Caco-2 (cell line): ENCODE measurements at regions of chr9 and their contacts with region 1.

Region 1: DNA sequence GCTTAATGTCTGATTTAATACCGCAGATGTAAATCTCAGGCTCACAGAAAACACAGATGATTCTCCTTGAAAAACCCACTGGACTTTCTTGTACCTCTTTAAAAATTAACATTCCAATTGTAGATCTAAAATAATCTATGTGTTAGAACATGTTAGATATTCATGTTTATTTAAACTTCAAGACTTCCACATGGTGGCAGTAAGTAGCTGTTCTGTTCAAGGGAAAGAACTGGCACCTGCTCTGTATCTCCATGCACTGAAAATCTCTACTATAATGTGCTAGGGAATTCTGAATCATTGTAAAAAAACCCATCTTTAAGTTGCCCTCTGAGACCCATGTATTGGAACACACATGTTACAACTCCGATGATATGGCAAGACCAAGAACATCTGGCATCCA is 366.9 kb downstream of the DMRTA1 start:
- DNase-seq: no peak
- H3K4me3 ChIP-seq: no peak overlapping the region
- H3K4me3 Mint-ChIP-seq: no peak overlapping the region
- H3K27ac Mint-ChIP-seq: no peak overlapping the region
- H3K4me1 ChIP-seq: no peaks in the 10 kb centered on the region
- H3K4me1 Mint-ChIP-seq: no peaks in the 10 kb centered on the region
- H3K27me3 ChIP-seq: no peaks in the 10 kb centered on the region
- H3K27me3 Mint-ChIP-seq: peaks cover 4% of the 10 kb centered on the region
- CTCF ChIP-seq: no peak

Region 2: GRCh38 chr9:22425551-22425950 is 388.0 kb before region 1 on chr9:
- CTCF ChIA-PET with region 1: no interaction called
- POLR2A ChIA-PET with region 1: no interaction called
- intact Hi-C with region 1: no loop called
- DNase-seq: no peak
- H3K4me3 ChIP-seq: no peak overlapping the region
- H3K4me3 Mint-ChIP-seq: no peak overlapping the region
- H3K27ac Mint-ChIP-seq: no peak overlapping the region
- H3K4me1 ChIP-seq: no peaks in the 10 kb centered on the region
- H3K4me1 Mint-ChIP-seq: no peaks in the 10 kb centered on the region
- H3K27me3 ChIP-seq: no peaks in the 10 kb centered on the region
- H3K27me3 Mint-ChIP-seq: peaks cover 13% of the 10 kb centered on the region
- CTCF ChIP-seq: no peak

Region 3: GRCh38 chr9:22693156-22693555 is 120.4 kb before region 1 on chr9:
- CTCF ChIA-PET with region 1: no interaction called
- POLR2A ChIA-PET with region 1: no interaction called
- intact Hi-C with region 1: no loop called
- DNase-seq: no peak
- H3K4me3 ChIP-seq: no peak overlapping the region
- H3K4me3 Mint-ChIP-seq: no peak overlapping the region
- H3K27ac Mint-ChIP-seq: no peak overlapping the region
- H3K4me1 ChIP-seq: no peaks in the 10 kb centered on the region
- H3K4me1 Mint-ChIP-seq: no peaks in the 10 kb centered on the region
- H3K27me3 ChIP-seq: no peaks in the 10 kb centered on the region
- H3K27me3 Mint-ChIP-seq: peaks cover 3% of the 10 kb centered on the region
- CTCF ChIP-seq: no peak

Region 4: GRCh38 chr9:22913518-22913917 is 100.0 kb after region 1 on chr9:
- CTCF ChIA-PET with region 1: no interaction called
- POLR2A ChIA-PET with region 1: no interaction called
- intact Hi-C with region 1: no loop called
- DNase-seq: no peak
- H3K4me3 ChIP-seq: no peak overlapping the region
- H3K4me3 Mint-ChIP-seq: no peak overlapping the region
- H3K27ac Mint-ChIP-seq: no peak overlapping the region
- H3K4me1 ChIP-seq: no peaks in the 10 kb centered on the region
- H3K4me1 Mint-ChIP-seq: no peaks in the 10 kb centered on the region
- H3K27me3 ChIP-seq: no peaks in the 10 kb centered on the region
- H3K27me3 Mint-ChIP-seq: no peaks in the 10 kb centered on the region
- CTCF ChIP-seq: no peak

Region 5: GRCh38 chr9:22986556-22986955 is 173.0 kb after region 1 on chr9:
- CTCF ChIA-PET with region 1: no interaction called
- POLR2A ChIA-PET with region 1: no interaction called
- intact Hi-C with region 1: loop called (anchors 1 kb)
- DNase-seq: peak in 1 of 2 experiments; percentile 2
- H3K4me3 ChIP-seq: no peak overlapping the region
- H3K4me3 Mint-ChIP-seq: no peak overlapping the region
- H3K27ac Mint-ChIP-seq: no peak overlapping the region
- H3K4me1 ChIP-seq: no peaks in the 10 kb centered on the region
- H3K4me1 Mint-ChIP-seq: no peaks in the 10 kb centered on the region
- H3K27me3 ChIP-seq: no peaks in the 10 kb centered on the region
- H3K27me3 Mint-ChIP-seq: no peaks in the 10 kb centered on the region
- CTCF ChIP-seq: peak in 1 of 2 experiments; percentile 29

Region 6: GRCh38 chr9:23088932-23089366 is 275.4 kb after region 1 on chr9:
- CTCF ChIA-PET with region 1: no interaction called
- POLR2A ChIA-PET with region 1: no interaction called
- intact Hi-C with region 1: loop called (anchors 2 kb)
- DNase-seq: peak in 1 of 2 experiments; percentile 15
- H3K4me3 ChIP-seq: no peak overlapping the region
- H3K4me3 Mint-ChIP-seq: no peak overlapping the region
- H3K27ac Mint-ChIP-seq: no peak overlapping the region
- H3K4me1 ChIP-seq: no peaks in the 10 kb centered on the region
- H3K4me1 Mint-ChIP-seq: no peaks in the 10 kb centered on the region
- H3K27me3 ChIP-seq: no peaks in the 10 kb centered on the region
- H3K27me3 Mint-ChIP-seq: peaks cover 2% of the 10 kb centered on the region
- CTCF ChIP-seq: no peak